ENCODE measurements at regions of chr6 and their contacts with region 1.

Region 1: GRCh38 chr6:38262026-38262425 is 377.7 kb downstream of the BTBD9 start:
- DNase-seq: peak; percentile 92
- ATAC-seq: peak; percentile 93
- H3K4me3 ChIP-seq: peak overlapping the region; percentile 11; the same call in 1 of the 2 replicates
- H3K27ac ChIP-seq: peak overlapping the region; percentile 36; the same call in 1 of the 2 replicates
- H3K4me1 ChIP-seq: peaks cover 18% of the 10 kb centered on the region
- H3K27me3 ChIP-seq: no peaks in the 10 kb centered on the region
- CTCF ChIP-seq: no peak
- POLR2A ChIP-seq: no peak
- RAD21 ChIP-seq: no peak

Region 2: GRCh38 chr6:38088829-38089228 is 173.2 kb before region 1 on chr6:
- CTCF ChIA-PET with region 1: no interaction called
- POLR2A ChIA-PET with region 1: no interaction called
- dilution Hi-C with region 1: no loop called
- in situ Hi-C with region 1: no loop called
- intact Hi-C with region 1: no loop called
- DNase-seq: no peak
- ATAC-seq: no peak
- H3K4me3 ChIP-seq: no peak overlapping the region
- H3K27ac ChIP-seq: no peak overlapping the region
- H3K4me1 ChIP-seq: no peaks in the 10 kb centered on the region; the same call in 1 of the 2 replicates
- H3K27me3 ChIP-seq: no peaks in the 10 kb centered on the region
- CTCF ChIP-seq: no peak
- POLR2A ChIP-seq: no peak
- RAD21 ChIP-seq: no peak

Region 3: DNA sequence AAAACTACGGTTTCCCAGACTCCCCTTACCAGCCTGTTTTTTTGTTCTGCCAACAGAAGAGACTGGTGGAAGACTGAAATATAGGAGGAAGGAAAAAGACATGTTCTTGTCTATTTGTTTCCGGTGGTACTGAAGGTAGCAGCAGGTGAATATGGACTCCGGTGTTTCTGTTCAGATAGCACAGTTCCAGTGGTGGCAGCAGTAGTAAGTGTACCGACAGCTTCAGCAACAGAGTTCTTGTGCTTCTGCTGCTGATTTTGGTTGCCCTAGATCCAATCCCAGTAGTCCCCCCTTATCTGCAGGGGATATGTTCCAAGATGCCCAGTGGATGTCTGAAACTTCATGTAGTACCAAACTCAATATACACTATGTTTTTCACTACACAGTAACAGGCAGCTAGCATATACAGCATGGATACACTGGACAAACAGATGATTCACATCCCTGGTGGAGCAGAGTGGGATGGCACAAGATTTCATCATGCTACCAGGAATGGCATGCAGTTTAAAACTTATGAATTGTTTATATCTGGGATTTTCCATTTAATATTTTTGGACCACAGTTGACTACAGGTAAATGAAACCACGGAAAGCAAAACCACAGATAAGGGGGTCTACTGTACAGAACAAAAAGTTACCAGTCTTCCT is 75.9 kb after region 1 on chr6:
- CTCF ChIA-PET with region 1: no interaction called
- POLR2A ChIA-PET with region 1: no interaction called
- dilution Hi-C with region 1: no loop called
- in situ Hi-C with region 1: no loop called
- intact Hi-C with region 1: loop called (anchors 5 kb)
- DNase-seq: peak; percentile 88
- ATAC-seq: peak; percentile 97
- H3K4me3 ChIP-seq: no peak overlapping the region
- H3K27ac ChIP-seq: peak overlapping the region; percentile 46; the same call in 1 of the 2 replicates
- H3K4me1 ChIP-seq: peaks cover 6% of the 10 kb centered on the region
- H3K27me3 ChIP-seq: no peaks in the 10 kb centered on the region
- CTCF ChIP-seq: peak; percentile 36
- POLR2A ChIP-seq: no peak
- RAD21 ChIP-seq: peak; percentile 39; the same call in 1 of the 2 replicates

Region 4: DNA sequence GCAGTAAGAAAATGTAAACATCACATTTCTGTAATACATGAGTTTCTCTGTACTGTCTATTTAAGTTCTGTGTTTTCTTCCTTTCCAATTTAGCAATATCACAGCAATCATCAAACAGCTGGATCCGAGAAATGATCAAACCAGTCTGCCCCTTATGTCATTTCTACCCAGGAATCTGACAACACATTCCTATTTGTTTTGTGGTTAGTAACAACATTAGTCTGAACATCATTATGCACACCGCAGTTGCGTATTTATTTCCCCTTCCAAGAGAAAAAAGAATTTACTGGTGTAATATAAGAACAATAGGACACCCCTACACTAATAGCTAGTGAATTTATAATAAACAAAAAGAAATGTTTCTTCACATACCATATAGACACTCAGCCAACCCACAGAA is 198.2 kb after region 1 on chr6:
- CTCF ChIA-PET with region 1: no interaction called
- POLR2A ChIA-PET with region 1: no interaction called
- dilution Hi-C with region 1: no loop called
- in situ Hi-C with region 1: no loop called
- intact Hi-C with region 1: no loop called
- DNase-seq: peak; percentile 45
- ATAC-seq: peak; percentile 42; the same call in 1 of the 2 replicates
- H3K4me3 ChIP-seq: no peak overlapping the region
- H3K27ac ChIP-seq: no peak overlapping the region
- H3K4me1 ChIP-seq: peaks cover 2% of the 10 kb centered on the region; the same call in 1 of the 2 replicates
- H3K27me3 ChIP-seq: no peaks in the 10 kb centered on the region
- CTCF ChIP-seq: no peak
- POLR2A ChIP-seq: no peak
- RAD21 ChIP-seq: no peak

Measured in IMR-90 (cell line).